ENCODE measurements at regions of chr16 and their contacts with region 1.

Region 1: GRCh38 chr16:31382485-31383161 is 10.5 kb upstream of the ITGAD start:
- DNase-seq: peak; percentile 83
- H3K4me3 Mint-ChIP-seq: no peak overlapping the region
- H3K27ac Mint-ChIP-seq: no peak overlapping the region
- H3K4me1 Mint-ChIP-seq: peaks cover 27% of the 10 kb centered on the region
- H3K27me3 Mint-ChIP-seq: peaks cover 30% of the 10 kb centered on the region
- CTCF ChIP-seq: peak; percentile 78

Region 2: DNA sequence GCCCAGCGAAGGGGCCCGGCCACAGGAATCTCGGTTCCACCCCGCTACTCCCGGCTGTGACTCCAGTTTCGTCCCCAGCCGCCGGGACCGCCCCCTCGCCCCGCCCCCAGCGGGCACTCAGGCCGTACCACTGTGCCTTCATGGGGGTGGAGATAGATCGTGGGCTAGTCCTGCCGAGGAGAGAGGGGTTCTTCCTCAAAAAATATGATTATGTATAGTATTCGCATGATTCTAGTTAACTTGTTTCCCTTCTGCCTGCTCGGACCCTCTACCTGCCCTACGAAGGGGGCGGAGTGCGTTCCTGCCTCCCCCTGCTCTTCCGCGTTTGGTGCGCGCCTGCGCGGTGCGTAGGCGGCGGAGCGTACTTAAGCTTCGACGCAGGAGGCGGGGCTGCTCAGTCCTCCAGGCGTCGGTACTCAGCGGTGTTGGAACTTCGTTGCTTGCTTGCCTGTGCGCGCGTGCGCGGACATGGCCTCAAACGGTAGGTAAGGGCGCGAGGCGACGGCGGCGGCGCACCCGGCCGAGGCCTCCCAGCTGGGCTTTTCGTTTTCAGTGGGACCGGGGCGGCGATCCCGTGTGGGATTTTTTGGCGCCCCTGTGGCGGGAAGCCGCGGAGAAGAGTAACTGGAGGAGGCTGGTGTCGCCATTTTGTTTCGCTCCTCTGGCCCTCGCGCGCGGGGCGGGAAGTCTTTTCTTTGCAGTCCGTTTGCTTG is 202.7 kb before region 1 on chr16 and contains the start of gene FUS:
- CTCF ChIA-PET with region 1: interaction called, 4 read pairs
- intact Hi-C with region 1: loop called (anchors 10 kb)
- DNase-seq: peak; percentile 92
- H3K4me3 Mint-ChIP-seq: peak within 1 kb of the TSS; percentile 82
- H3K27ac Mint-ChIP-seq: peak within 1 kb of the TSS; percentile 97
- H3K4me1 Mint-ChIP-seq: peaks cover 28% of the 10 kb centered on the region
- H3K27me3 Mint-ChIP-seq: no peaks in the 10 kb centered on the region
- CTCF ChIP-seq: no peak
- total RNA-seq, gene FUS: 550 and 629 TPM in 2 replicates

Region 3: GRCh38 chr16:31402687-31403086 is 20.1 kb after region 1 on chr16:
- CTCF ChIA-PET with region 1: no interaction called
- intact Hi-C with region 1: loop called (anchors 2 kb)
- DNase-seq: peak; percentile 36
- H3K4me3 Mint-ChIP-seq: no peak overlapping the region
- H3K27ac Mint-ChIP-seq: no peak overlapping the region
- H3K4me1 Mint-ChIP-seq: peaks cover 13% of the 10 kb centered on the region
- H3K27me3 Mint-ChIP-seq: no peaks in the 10 kb centered on the region
- CTCF ChIP-seq: no peak

Region 4: DNA sequence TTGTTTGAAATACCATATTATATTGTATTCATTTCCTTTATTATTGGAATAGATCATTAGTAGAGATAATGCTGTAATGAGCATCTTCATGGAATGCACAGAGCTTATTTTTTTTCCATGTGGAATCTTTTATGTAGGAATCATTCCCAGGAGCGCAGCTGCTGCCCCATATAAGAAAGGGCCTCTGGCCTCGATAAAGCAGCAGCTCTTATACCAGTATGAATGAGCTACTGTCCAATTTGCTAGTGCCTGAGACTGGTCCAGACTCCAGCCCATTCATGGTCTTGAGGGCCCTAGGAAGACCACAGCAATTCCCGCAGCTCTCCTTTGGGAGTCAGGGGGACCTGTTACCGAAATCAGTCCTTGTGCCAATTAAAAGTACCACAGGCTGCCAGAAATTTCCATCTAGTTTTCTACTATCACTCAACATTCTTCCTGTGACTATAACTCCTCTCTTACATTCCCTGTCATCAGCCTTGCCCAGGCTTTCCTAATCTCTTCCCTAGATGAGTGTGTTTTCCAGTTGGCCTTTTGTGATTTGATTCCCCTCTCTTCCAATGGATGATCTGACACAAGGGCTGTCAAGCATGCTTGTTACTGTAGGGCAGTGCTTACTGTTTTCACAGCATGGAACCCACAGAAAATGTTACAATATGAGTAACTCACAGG is 58.0 kb after region 1 on chr16:
- CTCF ChIA-PET with region 1: interaction called, 3 read pairs
- intact Hi-C with region 1: loop called (anchors 5 kb)
- DNase-seq: no peak
- H3K4me3 Mint-ChIP-seq: no peak overlapping the region
- H3K27ac Mint-ChIP-seq: no peak overlapping the region
- H3K4me1 Mint-ChIP-seq: peaks cover 7% of the 10 kb centered on the region
- H3K27me3 Mint-ChIP-seq: peaks cover 8% of the 10 kb centered on the region
- CTCF ChIP-seq: no peak

Region 5: DNA sequence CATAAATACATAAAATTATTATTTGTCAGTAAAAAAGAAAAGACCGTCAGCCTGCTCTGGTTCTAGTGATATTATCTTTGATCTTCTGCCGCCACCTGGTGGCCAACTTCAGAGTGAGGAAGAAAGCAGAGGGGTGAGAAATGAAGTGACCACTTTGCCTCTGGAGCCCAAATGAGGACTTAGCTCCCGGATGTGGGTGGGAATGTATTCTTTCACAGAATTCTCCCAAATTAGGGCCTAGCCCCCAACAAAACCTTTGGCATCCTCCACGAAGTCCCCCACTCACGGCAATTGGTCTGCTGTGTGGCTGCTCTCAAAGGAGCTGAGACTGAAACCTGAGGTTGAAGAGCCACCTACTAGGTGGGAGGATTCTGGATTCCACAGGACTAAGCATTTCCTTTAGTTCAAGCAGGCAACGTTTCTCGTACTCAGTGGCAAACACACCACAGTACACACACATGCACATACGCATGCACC is 486.1 kb after region 1 on chr16:
- CTCF ChIA-PET with region 1: interaction called, 3 read pairs
- intact Hi-C with region 1: loop called (anchors 10 kb)
- DNase-seq: peak; percentile 86
- H3K4me3 Mint-ChIP-seq: no peak overlapping the region
- H3K27ac Mint-ChIP-seq: no peak overlapping the region
- H3K4me1 Mint-ChIP-seq: peaks cover 9% of the 10 kb centered on the region
- H3K27me3 Mint-ChIP-seq: peaks cover 34% of the 10 kb centered on the region
- CTCF ChIP-seq: peak; percentile 73

Measured in Calu3 (cell line).